ENCODE measurements at regions of chr5 and their contacts with region 1.

Region 1: GRCh38 chr5:141701360-141702119 is 19.5 kb upstream of the ARAP3 start:
- DNase-seq: no peak
- H3K4me3 ChIP-seq: peak overlapping the region in 1 of 3 experiments; percentile 72
- H3K4me3 Mint-ChIP-seq: peak overlapping the region in 1 of 2 donors; percentile 78
- H3K27ac ChIP-seq: no peak overlapping the region
- H3K27ac Mint-ChIP-seq: no peak overlapping the region
- H3K4me1 ChIP-seq: peaks cover 10 to 14% of the 10 kb centered on the region in 2 donors
- H3K4me1 Mint-ChIP-seq: peaks cover 21% of the 10 kb centered on the region
- H3K27me3 ChIP-seq: peaks cover 43 to 65% of the 10 kb centered on the region in 2 donors
- H3K27me3 Mint-ChIP-seq: peaks cover 9 to 29% (median 15%) of the 10 kb centered on the region in 3 donors
- CTCF ChIP-seq: no peak

Region 2: GRCh38 chr5:141787376-141787775 is 85.8 kb after region 1 on chr5:
- intact Hi-C with region 1: no loop called
- DNase-seq: no peak
- H3K4me3 ChIP-seq: no peak overlapping the region
- H3K4me3 Mint-ChIP-seq: no peak overlapping the region
- H3K27ac ChIP-seq: no peak overlapping the region
- H3K27ac Mint-ChIP-seq: peak overlapping the region in 1 of 7 donors; percentile 19
- H3K4me1 ChIP-seq: no peaks in the 10 kb centered on the region
- H3K4me1 Mint-ChIP-seq: no peaks in the 10 kb centered on the region
- H3K27me3 ChIP-seq: no peaks in the 10 kb centered on the region
- H3K27me3 Mint-ChIP-seq: peaks cover 11 to 19% (median 13%) of the 10 kb centered on the region in 3 donors
- CTCF ChIP-seq: no peak

Region 3: GRCh38 chr5:141878711-141879425 is 177.3 kb after region 1 on chr5:
- intact Hi-C with region 1: loop called in 1 of 2 experiments (anchors 5 kb)
- DNase-seq: peak; percentile 84 to 92 (median 89)
- H3K4me3 ChIP-seq: peak overlapping the region in 1 of 3 experiments; percentile 58
- H3K4me3 Mint-ChIP-seq: peak overlapping the region; percentile 72 to 98
- H3K27ac ChIP-seq: no peak overlapping the region
- H3K27ac Mint-ChIP-seq: peak overlapping the region in 1 of 7 donors; percentile 73
- H3K4me1 ChIP-seq: peaks cover 12 to 18% of the 10 kb centered on the region in 2 donors
- H3K4me1 Mint-ChIP-seq: peaks cover 25% of the 10 kb centered on the region
- H3K27me3 ChIP-seq: peaks cover 74 to 92% of the 10 kb centered on the region in 2 donors
- H3K27me3 Mint-ChIP-seq: peaks cover 88 to 97% (median 93%) of the 10 kb centered on the region in 3 donors
- CTCF ChIP-seq: peak; percentile 98